ENCODE measurements at regions of chr2 and their contacts with region 1.

Region 1: DNA sequence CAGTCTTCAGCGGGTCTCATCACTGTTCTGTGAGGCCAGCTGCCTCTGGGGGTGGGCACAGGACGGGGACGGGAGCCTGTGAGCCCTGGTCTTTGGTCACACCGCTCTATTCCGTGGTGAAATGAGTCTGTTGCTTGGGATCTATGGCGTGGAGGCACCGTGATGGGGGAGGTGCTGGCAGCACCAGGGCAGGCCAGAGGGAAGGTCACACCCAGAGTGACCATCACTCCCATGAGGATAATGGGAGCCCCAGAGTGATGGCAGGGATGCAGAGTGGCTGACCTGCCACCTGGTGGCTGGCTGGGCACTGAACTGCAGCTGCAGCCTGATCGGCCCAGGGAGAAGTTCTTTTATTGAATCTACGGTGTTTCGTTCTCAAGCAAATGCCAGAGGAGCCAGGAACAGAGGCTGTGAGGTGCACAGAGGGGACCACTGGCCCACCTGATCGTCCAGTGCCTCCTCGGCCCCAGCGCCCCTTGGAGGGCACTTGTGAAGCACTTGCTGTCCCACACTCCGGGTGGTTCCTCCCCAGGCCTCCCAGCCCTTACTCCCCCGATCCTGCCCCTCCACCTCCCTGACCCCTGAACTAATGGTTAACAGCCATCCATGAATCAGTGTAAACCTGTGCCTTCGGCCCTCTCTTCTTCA is 17.9 kb downstream of the KCNIP3 start:
- DNase-seq: peak; percentile 14 to 19
- ATAC-seq: peak; percentile 57 to 68 (median 64)
- H3K4me3 ChIP-seq: no peak overlapping the region
- H3K27ac ChIP-seq: no peak overlapping the region
- H3K4me1 ChIP-seq: no peaks in the 10 kb centered on the region
- H3K27me3 ChIP-seq: peaks cover 0 to 11% (median 6%) of the 10 kb centered on the region in 3 donors
- CTCF ChIP-seq: peak; percentile 55

Region 2: GRCh38 chr2:95185197-95185596 is 129.9 kb before region 1 on chr2:
- intact Hi-C with region 1: loop called (anchors 5 to 10 kb)
- DNase-seq: no peak
- ATAC-seq: no peak
- H3K4me3 ChIP-seq: no peak overlapping the region
- H3K27ac ChIP-seq: no peak overlapping the region
- H3K4me1 ChIP-seq: no peaks in the 10 kb centered on the region
- H3K27me3 ChIP-seq: no peaks in the 10 kb centered on the region
- CTCF ChIP-seq: no peak

Measured in psoas muscle (tissue), 8 donors.